GM10248 (cell line): ENCODE measurements at regions of chr4 and their contacts with region 1.

Region 1: DNA sequence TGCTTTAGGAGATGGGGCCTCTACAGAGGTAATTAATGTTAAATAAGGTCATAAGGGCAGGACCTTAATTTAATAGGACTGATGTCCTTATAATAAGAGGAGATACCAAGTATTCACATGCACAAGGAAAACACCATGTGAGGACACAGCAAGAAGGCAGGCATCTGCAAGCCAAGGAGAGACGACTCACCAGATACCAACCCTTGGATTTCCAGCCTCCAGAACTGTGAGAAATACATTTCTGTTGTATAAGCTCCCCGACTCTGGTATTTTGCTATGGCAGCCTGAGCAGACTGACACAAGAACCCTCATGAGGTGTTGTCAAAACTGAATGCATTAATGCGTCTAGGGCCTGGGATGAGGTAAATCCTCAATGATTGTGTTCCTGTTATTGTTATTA is 56.2 kb upstream of the MAPK10 start:
- DNase-seq: no peak
- CTCF ChIP-seq: no peak

Region 2: GRCh38 chr4:86380243-86380642 is 35.8 kb before region 1 on chr4:
- CTCF ChIA-PET with region 1: no interaction called
- POLR2A ChIA-PET with region 1: no interaction called
- DNase-seq: no peak
- CTCF ChIP-seq: no peak

Region 3: GRCh38 chr4:86400216-86400615 is 15.9 kb before region 1 on chr4:
- CTCF ChIA-PET with region 1: interaction called, 17 read pairs
- POLR2A ChIA-PET with region 1: no interaction called
- DNase-seq: no peak
- CTCF ChIP-seq: no peak

Region 4: DNA sequence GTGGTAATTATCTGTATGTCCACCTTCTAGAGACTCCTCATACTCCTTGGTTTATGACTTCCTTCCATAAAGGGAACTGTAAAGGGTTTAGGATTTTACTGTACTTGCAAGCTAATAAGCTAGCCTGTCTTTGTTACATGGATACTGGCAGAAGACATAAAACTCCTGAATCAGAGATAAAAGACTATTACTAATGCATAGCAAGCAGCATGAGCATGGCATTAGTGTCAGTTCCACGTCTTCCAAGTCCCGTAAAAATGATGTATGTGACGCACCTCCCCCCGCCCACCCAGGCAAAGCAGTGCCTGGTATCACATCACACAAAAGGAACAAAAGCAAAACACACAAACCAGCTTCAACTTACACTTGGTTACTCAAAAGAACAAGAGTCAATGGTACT is 362.1 kb after region 1 on chr4:
- CTCF ChIA-PET with region 1: no interaction called
- POLR2A ChIA-PET with region 1: no interaction called
- DNase-seq: no peak
- CTCF ChIP-seq: no peak